Naive thymus-derived CD4-positive, alpha-beta T cell (primary cell): ENCODE measurements at regions of chr4 and their contacts with region 1.

Region 1: DNA sequence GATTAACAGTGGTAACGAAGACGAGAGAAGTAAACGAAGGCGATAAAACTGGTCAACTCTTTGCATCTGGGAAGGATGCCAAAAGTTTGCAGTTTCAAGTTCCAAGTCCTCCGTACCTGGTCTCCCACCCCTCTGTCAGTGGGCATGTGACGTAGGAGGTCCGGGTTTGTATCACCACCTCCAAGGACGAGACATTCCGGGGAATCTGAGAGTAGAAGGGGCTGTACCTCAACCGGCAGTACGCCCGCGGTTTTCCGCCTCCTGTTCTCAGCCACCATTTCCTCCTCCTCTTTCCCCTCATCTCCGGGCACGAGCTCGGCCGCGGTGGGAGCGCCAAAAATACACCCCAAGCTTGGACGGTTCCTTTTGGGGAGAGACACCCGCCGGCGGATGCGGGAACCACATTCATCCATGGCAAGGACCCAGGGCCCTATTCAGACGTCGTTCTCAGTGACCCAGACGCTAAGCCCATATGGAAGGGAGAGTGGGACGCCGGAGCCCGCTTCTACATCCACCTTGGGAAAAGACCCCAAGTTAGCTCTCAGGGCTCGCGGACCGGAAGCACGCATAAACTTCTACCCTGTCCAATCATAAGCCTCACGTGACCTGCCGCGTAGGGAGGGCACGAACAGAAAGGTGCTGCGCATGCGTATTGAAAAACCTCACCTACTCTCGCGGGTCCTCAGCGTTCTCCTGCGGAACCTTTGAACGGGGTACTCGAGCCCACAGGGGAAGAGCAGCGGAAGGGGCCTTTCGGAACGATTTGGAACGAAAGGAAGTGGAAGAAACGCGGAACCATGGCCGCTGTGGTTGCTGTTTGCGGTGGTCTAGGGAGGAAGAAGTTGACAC is at the starts of genes HELQ and MRPS18C:
- DNase-seq: peak; percentile 77 to 98 (median 97)
- ATAC-seq: peak; percentile 94
- H3K4me3 ChIP-seq: peak within 1 kb of the TSS; percentile 75
- H3K4me3 Mint-ChIP-seq: peak within 1 kb of the TSS; percentile 98 to 100 (median 99)
- H3K27ac ChIP-seq: peak within 1 kb of the TSS; percentile 98
- H3K27ac Mint-ChIP-seq: peak within 1 kb of the TSS; percentile 100
- H3K4me1 ChIP-seq: peaks cover 24 to 33% of the 10 kb centered on the region in 2 donors
- H3K4me1 Mint-ChIP-seq: peaks cover 21 to 75% (median 58%) of the 10 kb centered on the region in 7 donors
- H3K27me3 ChIP-seq: no peaks in the 10 kb centered on the region
- H3K27me3 Mint-ChIP-seq: peaks cover 0 to 3% (median 0%) of the 10 kb centered on the region in 5 donors
- total RNA-seq, gene HELQ: 14.1 to 53.9 (median 40.4) TPM
- total RNA-seq, gene MRPS18C: 18.4 to 56.1 (median 46.7) TPM

Region 2: DNA sequence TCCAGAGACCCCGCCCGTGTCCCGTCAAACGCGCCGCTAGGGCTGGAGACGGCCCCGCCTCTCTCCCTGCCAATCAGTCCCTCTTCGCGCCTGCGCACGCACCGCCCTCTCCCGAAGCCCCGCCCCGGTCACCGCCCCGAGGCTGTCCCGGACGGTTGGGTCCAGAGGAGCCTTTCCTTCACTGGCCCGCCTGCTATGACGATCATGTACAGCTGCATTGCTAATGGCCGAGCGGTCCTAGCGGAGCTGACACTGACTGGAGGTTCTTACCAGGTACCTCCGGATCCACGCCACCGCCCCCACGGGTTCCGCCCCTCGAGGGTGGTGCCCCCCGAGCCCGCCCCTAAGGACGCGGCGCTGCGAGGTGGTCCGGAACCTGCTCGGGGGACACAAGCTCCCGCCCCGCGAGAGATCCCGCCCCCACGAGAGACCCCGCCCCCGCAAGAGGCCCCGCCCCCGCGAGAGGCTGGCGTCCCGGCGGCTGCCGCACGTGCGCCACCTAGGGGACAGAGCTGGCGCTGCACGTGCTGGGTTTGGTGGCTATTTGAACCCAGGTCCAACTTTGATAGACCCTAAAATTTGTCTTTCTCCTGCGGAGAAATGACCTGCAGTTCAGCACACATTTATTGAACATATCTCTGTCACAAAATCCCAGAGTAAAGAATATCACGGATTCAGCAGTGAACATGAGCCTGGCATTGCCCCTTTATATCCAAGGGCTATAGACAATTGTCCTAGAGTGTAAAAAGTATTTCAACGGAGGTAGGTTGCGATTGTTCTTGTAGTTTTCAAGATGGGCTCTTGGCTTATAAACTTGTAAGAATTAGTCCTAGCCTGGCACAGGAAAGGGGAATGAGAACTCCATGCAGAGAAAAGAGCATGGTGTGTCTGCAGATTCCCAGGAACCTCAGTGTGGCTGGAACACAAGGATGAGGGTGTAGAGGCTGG is 1170.4 kb before region 1 on chr4:
- CTCF ChIA-PET with region 1: no interaction called
- POLR2A ChIA-PET with region 1: no interaction called
- intact Hi-C with region 1: loop called in 1 of 2 experiments (anchors 1 kb)
- DNase-seq: peak; percentile 97 to 100 (median 99)
- ATAC-seq: peak; percentile 94
- H3K4me3 ChIP-seq: peak overlapping the region; percentile 55
- H3K4me3 Mint-ChIP-seq: peak overlapping the region; percentile 70 to 91 (median 86)
- H3K27ac ChIP-seq: peak overlapping the region; percentile 71
- H3K27ac Mint-ChIP-seq: peak overlapping the region; percentile 53 to 94 (median 83)
- H3K4me1 ChIP-seq: peaks cover 4 to 11% of the 10 kb centered on the region in 2 donors
- H3K4me1 Mint-ChIP-seq: peaks cover 9 to 22% (median 13%) of the 10 kb centered on the region in 7 donors
- H3K27me3 ChIP-seq: no peaks in the 10 kb centered on the region
- H3K27me3 Mint-ChIP-seq: peaks cover 0 to 28% (median 0%) of the 10 kb centered on the region in 5 donors

Region 3: DNA sequence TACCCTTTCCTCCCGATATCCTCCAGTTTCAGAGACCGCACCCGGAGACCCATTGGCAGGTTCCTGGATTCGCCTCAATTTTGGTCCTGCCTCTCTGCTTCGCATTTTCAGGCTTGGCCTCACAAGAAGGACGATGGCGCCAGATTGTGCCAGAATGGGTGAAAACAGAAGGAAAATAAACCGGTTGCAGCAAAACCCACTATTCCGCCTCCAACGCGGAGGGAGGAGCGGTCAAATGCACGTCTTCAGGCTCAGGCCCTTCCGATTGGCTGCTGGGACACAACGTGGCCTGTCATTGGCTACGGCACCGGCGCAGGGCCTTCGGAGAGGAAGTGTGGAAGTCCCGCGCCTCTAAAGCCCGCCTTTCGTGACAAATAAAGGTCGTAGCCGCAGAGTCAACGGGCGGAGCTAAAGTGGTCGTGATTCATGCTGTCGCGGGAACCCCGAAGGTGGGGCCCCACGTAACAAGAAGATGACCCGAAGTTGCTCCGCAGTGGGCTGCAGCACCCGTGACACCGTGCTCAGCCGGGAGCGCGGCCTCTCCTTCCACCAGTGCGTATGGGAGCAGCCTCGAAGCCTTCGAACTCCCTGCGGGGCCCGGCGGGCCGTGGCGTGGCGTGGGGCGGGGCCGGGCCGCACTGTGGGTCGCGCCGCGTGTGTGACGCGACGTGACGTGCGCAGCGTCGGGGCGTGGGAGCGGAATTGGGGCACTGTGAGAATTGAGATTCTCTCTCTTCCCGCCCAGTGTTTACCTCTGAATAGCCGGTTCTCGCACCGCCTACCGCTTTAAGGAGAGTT is 555.0 kb before region 1 on chr4 and contains the start of gene THAP9:
- CTCF ChIA-PET with region 1: no interaction called
- POLR2A ChIA-PET with region 1: no interaction called
- intact Hi-C with region 1: loop called (anchors 1 to 2 kb)
- DNase-seq: peak; percentile 92 to 100 (median 98)
- ATAC-seq: peak; percentile 91
- H3K4me3 ChIP-seq: peak within 1 kb of the TSS; percentile 91
- H3K4me3 Mint-ChIP-seq: no peak within 1 kb of the TSS
- H3K27ac ChIP-seq: peak within 1 kb of the TSS; percentile 98
- H3K27ac Mint-ChIP-seq: no peak within 1 kb of the TSS
- H3K4me1 ChIP-seq: peaks cover 13 to 15% of the 10 kb centered on the region in 2 donors
- H3K4me1 Mint-ChIP-seq: peaks cover 0 to 30% (median 15%) of the 10 kb centered on the region in 7 donors
- H3K27me3 ChIP-seq: no peaks in the 10 kb centered on the region
- H3K27me3 Mint-ChIP-seq: peaks cover 0 to 2% (median 0%) of the 10 kb centered on the region in 5 donors
- total RNA-seq, gene THAP9: 2.2 to 4.9 (median 4.4) TPM

Region 4: GRCh38 chr4:83217721-83218522 is 237.6 kb before region 1 on chr4:
- CTCF ChIA-PET with region 1: no interaction called
- POLR2A ChIA-PET with region 1: interaction called, 4 read pairs
- intact Hi-C with region 1: loop called in 1 of 2 experiments (anchors 2 kb)
- DNase-seq: peak in 8 of 9 donors; percentile 52 to 91 (median 84)
- ATAC-seq: peak; percentile 95
- H3K4me3 ChIP-seq: peak overlapping the region; percentile 23
- H3K4me3 Mint-ChIP-seq: peak overlapping the region; percentile 57 to 84 (median 72)
- H3K27ac ChIP-seq: peak overlapping the region; percentile 78
- H3K27ac Mint-ChIP-seq: peak overlapping the region; percentile 88 to 96 (median 92)
- H3K4me1 ChIP-seq: peaks cover 65 to 77% of the 10 kb centered on the region in 2 donors
- H3K4me1 Mint-ChIP-seq: peaks cover 56 to 83% (median 74%) of the 10 kb centered on the region in 7 donors
- H3K27me3 ChIP-seq: no peaks in the 10 kb centered on the region
- H3K27me3 Mint-ChIP-seq: no peaks in the 10 kb centered on the region

Region 5: DNA sequence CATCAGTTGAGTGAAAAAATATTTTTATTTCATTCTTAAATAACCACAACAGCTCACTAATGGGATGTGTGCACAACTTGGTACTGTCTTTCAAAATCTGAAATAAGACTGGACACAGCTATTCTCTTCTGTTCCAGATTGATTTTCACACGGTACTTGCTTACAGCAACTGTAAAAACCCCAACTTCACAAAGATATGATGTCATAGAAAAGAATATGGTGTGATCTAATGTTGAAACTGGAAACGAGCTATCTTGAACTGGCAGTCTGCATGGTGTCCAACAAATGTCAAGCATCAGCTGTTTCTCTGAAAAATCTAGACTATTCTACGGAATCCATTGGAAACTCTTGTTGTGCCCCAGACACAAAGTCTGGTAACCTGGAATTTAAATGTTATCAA is 14.6 kb before region 1 on chr4:
- CTCF ChIA-PET with region 1: interaction called, 6 read pairs
- POLR2A ChIA-PET with region 1: interaction called, 14 read pairs
- intact Hi-C with region 1: no loop called
- DNase-seq: no peak
- ATAC-seq: no peak
- H3K4me3 ChIP-seq: no peak overlapping the region
- H3K4me3 Mint-ChIP-seq: no peak overlapping the region
- H3K27ac ChIP-seq: no peak overlapping the region
- H3K27ac Mint-ChIP-seq: no peak overlapping the region
- H3K4me1 ChIP-seq: no peaks in the 10 kb centered on the region
- H3K4me1 Mint-ChIP-seq: peaks cover 0 to 31% (median 9%) of the 10 kb centered on the region in 7 donors
- H3K27me3 ChIP-seq: no peaks in the 10 kb centered on the region
- H3K27me3 Mint-ChIP-seq: no peaks in the 10 kb centered on the region

Region 6: DNA sequence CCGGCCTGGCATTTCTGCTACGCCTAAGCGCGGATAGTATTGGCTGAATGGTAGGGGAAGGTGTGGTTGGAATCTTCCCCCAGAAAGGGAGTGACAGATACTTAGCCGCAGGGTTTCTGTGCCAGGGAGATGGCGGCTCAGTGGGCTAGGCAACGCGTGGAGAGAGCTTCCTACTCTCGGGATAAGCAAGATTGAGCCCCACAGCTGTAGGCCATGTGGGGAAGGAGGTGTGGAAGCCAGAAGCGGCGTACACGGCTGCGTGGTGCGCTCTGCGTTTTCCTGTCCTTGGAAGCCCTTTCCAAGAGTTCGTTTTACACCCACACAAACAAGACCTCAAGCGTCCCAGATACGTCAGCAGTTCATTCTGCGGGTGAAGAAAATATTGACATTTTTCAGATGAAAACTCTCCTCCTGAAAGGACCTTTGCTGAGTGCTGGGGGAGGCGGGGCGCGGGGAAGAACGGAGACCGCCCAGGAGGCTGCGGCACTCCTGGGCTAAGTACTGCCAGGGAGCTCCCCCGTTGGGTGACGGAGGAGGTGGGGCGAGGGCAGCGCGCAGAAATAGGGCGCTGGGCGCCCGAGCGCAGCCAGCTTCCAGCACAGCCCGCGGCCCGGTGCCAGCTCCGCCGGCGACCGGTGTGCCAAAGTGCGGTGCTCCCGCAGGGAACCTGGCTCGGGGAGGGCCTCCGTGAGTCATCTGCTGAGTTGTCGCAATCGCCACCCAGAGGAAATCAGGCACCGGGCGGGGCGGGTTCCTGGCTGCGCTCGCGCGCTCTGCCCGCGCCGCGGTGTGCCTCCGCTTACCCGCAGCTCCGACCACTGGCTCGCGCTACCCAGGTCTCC is 80.2 kb after region 1 on chr4 and contains the start of gene GPAT3:
- CTCF ChIA-PET with region 1: no interaction called
- POLR2A ChIA-PET with region 1: interaction called, 8 read pairs
- intact Hi-C with region 1: loop called in 1 of 2 experiments (anchors 1 kb)
- DNase-seq: peak; percentile 37 to 76 (median 58)
- ATAC-seq: peak; percentile 89
- H3K4me3 ChIP-seq: peak within 1 kb of the TSS; percentile 80
- H3K4me3 Mint-ChIP-seq: peak within 1 kb of the TSS; percentile 87 to 97 (median 90)
- H3K27ac ChIP-seq: peak within 1 kb of the TSS; percentile 56
- H3K27ac Mint-ChIP-seq: peak within 1 kb of the TSS; percentile 24 to 92 (median 73)
- H3K4me1 ChIP-seq: peaks cover 0 to 8% of the 10 kb centered on the region in 2 donors
- H3K4me1 Mint-ChIP-seq: peaks cover 13 to 37% (median 17%) of the 10 kb centered on the region in 7 donors
- H3K27me3 ChIP-seq: no peaks in the 10 kb centered on the region
- H3K27me3 Mint-ChIP-seq: peaks cover 0 to 59% (median 20%) of the 10 kb centered on the region in 5 donors
- total RNA-seq, gene GPAT3: 3.0 to 14.6 (median 5.8) TPM